Calu3 (cell line): ENCODE measurements at regions of chr10 and their contacts with region 1.

Region 1: GRCh38 chr10:97572214-97572989 is at the start of gene ANKRD2:
- DNase-seq: peak; percentile 81
- H3K4me3 Mint-ChIP-seq: peak within 1 kb of the TSS; percentile 28
- H3K27ac Mint-ChIP-seq: peak within 1 kb of the TSS; percentile 64
- H3K4me1 Mint-ChIP-seq: peaks cover 45% of the 10 kb centered on the region
- H3K27me3 Mint-ChIP-seq: no peaks in the 10 kb centered on the region
- CTCF ChIP-seq: peak; percentile 34
- total RNA-seq, gene ANKRD2: 0.47 and 0.90 TPM in 2 replicates

Region 2: DNA sequence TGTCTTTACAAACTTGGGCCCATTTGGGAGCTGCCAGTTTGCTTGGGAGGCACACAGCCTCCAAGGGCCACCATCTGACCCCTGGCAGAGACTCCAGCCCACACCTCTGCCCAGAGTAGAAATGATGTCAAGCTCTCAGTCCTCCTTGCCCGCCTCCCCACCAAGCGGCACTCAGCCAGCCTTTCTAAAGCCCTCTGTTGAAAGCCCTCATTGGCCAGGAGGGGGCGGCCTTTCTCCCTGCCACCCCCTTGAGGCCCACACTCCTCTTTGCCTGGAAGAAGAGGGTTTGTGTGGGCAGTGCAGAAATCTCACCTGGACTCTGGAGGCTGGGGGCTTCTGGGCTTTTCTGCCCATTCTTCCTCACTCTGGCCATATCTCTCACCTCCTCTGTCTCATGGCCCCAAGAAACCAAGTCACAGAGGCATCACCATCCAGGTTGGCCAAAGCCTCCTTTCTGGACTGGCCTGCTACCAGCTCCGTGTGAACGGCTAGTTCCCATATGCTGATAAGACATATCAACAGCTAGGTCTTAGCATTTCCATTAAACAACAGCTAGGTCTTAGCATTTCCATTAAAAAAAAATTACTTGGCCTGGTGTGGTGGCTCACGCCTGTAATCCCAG is 37.5 kb before region 1 on chr10:
- CTCF ChIA-PET with region 1: no interaction called
- intact Hi-C with region 1: no loop called
- DNase-seq: peak; percentile 46
- H3K4me3 Mint-ChIP-seq: no peak overlapping the region
- H3K27ac Mint-ChIP-seq: no peak overlapping the region
- H3K4me1 Mint-ChIP-seq: no peaks in the 10 kb centered on the region
- H3K27me3 Mint-ChIP-seq: no peaks in the 10 kb centered on the region
- CTCF ChIP-seq: no peak

Region 3: DNA sequence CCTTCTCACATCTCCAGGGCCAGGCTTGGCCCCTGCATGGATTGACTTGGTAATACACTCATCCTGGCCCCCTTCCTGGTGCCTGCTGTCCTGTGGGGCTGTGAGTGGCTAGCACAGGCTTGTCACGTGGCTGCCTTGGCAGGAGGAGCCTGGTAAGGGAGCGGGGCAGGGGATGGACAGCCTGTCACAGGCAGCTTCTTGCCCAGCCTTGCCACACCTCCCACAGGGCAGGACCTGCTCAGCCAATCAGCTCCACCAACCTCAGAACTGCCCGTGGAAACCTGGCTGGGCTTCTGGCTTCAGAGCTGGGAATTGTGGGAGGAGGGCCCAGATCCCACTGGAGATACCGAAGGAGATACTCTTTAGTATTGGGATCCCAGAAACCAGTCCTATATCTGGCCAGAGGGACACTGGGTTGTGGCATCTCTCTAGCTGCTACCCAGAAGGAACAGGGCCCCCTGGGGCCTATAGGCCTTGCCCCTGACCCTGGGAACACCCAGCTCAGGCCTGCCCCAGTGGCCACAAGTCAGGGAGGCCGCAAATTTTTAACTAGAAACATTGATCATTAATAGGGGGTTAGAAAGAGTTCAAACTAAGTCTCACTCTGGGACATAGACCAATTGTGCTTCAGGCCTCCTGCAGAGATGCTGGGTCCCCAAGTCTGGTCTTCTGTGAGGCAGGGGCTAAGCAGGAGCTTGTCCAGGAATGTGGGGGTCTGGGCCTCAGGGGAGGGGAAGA is 11.8 kb after region 1 on chr10 and contains the start of gene HOGA1:
- CTCF ChIA-PET with region 1: interaction called, 21 read pairs
- intact Hi-C with region 1: no loop called
- DNase-seq: peak; percentile 88
- H3K4me3 Mint-ChIP-seq: peak within 1 kb of the TSS; percentile 71
- H3K27ac Mint-ChIP-seq: peak within 1 kb of the TSS; percentile 88
- H3K4me1 Mint-ChIP-seq: peaks cover 44% of the 10 kb centered on the region
- H3K27me3 Mint-ChIP-seq: no peaks in the 10 kb centered on the region
- CTCF ChIP-seq: no peak
- total RNA-seq, gene HOGA1: 7.8 and 7.9 TPM in 2 replicates

Region 4: GRCh38 chr10:97596101-97597062 is 24.0 kb after region 1 on chr10:
- CTCF ChIA-PET with region 1: interaction called, 10 read pairs
- intact Hi-C with region 1: no loop called
- DNase-seq: peak; percentile 16
- H3K4me3 Mint-ChIP-seq: peak overlapping the region; percentile 22
- H3K27ac Mint-ChIP-seq: peak overlapping the region; percentile 60
- H3K4me1 Mint-ChIP-seq: peaks cover 24% of the 10 kb centered on the region
- H3K27me3 Mint-ChIP-seq: no peaks in the 10 kb centered on the region
- CTCF ChIP-seq: no peak

Region 5: DNA sequence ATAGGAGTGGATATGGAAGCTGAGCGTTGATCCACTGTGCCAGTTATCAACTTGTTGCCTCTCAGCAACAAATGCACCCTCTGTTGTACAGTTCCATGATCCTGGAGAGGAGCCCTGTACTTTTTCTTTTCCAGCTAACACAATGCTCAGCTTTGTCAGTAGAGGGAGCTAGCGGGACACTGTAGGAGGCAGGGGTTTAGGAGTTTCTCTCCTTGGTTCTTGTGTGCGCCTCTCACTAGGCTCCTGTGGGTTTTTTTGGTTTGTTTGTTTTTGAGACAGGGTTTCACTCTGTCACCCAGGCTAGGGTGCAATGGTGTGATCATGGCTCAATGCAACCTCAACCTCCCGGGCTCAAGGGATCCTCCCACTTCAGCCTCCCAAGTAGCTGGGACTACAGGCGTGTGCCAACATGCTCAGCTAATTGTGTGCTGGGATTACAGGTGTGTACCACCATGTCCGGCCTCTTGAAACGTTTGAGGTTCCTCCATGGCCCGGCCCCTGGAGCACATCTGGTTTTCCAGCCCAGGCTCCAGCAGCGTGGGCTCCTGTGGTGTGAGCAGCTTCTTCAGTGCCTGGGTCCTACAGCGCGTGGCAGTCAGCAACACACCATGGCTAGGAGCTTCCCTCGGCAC is 129.2 kb after region 1 on chr10:
- CTCF ChIA-PET with region 1: no interaction called
- intact Hi-C with region 1: no loop called
- DNase-seq: peak; percentile 58
- H3K4me3 Mint-ChIP-seq: no peak overlapping the region
- H3K27ac Mint-ChIP-seq: no peak overlapping the region
- H3K4me1 Mint-ChIP-seq: no peaks in the 10 kb centered on the region
- H3K27me3 Mint-ChIP-seq: no peaks in the 10 kb centered on the region
- CTCF ChIP-seq: no peak

Region 6: DNA sequence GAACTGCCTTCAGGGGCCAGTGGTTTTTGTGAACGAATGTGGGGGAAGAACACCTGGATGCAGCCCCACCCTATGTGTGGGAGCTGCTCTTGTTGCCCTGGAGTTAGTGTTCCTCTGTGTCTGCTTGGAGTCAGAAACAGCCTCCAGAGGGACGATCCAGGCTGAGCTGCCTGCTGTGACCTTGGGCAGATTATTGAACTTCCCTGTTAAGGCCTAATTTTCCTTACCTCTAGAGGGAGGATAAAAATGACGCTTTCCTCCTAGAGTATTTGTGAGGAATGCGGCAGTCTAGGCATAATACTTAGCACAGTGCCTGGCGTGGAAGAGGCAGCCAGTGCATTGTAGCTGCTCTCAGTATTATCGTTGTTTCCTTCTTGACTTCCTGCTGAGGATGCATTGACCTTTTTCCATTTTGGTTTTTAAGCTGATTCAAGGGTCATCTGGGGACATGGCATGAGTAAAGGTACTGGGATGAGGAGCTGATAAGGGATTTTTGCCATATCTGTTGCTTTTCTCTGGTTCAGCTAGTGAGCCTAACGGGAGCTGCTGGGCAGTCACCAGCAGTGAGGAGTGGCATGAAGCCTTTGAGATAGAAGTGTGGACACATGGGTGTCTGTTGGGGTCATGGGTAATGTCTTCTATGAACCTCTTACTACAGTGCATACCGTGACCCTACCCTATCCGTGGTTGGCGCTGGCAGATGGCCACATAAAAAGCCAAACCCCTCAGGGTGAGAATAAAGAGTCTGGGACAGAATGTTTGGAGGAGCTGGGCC is 171.0 kb after region 1 on chr10:
- CTCF ChIA-PET with region 1: no interaction called
- intact Hi-C with region 1: no loop called
- DNase-seq: no peak
- H3K4me3 Mint-ChIP-seq: no peak overlapping the region
- H3K27ac Mint-ChIP-seq: no peak overlapping the region
- H3K4me1 Mint-ChIP-seq: peaks cover under 1% of the 10 kb centered on the region
- H3K27me3 Mint-ChIP-seq: no peaks in the 10 kb centered on the region
- CTCF ChIP-seq: no peak

Region 7: GRCh38 chr10:97882142-97883091 is 310.0 kb after region 1 on chr10:
- CTCF ChIA-PET with region 1: no interaction called
- intact Hi-C with region 1: no loop called
- DNase-seq: peak; percentile 89
- H3K4me3 Mint-ChIP-seq: peak overlapping the region; percentile 40
- H3K27ac Mint-ChIP-seq: peak overlapping the region; percentile 81
- H3K4me1 Mint-ChIP-seq: peaks cover 23% of the 10 kb centered on the region
- H3K27me3 Mint-ChIP-seq: no peaks in the 10 kb centered on the region
- CTCF ChIP-seq: no peak